Activated CD4-positive, alpha-beta T cell treated with anti-CD3 and anti-CD28 coated beads, Interleukin-2, amount 10 ng/mL, durations not matched to agents 24 days and 14 days (primary cell): ENCODE measurements at regions of chr6 and their contacts with region 1.

Region 1: DNA sequence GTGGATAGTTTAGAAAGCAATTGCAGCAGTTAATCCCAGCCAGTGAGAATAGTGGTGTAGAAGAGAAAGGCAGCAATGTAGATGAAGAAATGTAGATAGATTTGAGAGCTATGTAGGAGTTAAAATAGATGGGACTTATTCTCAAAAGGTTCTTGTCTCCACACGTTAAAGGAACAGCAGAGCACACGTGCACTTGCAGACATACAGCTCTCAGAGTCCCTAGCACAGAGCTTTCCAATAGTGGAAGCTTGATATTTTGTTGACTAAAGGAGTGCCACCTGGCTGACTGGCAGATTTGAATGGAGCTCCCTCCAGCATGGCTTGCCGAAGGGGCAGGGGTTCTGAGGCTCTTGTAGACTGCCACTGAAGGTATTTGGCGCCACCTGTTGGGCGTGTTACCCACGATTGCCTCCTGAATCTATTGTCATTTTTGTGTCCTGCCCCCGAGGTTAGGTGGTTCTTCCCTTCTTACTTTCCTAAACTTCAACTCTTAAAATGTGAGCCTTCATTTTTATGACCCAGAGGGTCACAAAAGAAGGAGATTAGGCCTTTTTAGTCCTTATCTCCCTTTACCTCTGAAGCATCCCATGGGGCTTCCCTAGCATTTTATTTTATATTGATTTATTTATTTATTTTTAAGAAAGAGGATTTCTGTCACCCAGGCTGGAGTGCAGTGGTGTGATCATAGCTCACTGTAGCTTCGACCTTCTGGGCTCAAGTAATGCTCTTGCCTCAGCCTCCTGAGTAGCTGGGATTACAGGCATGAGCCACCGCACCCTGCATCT is 16.4 kb downstream of the BRD2 start:
- DNase-seq: peak; percentile 96
- H3K4me3 Mint-ChIP-seq: no peak overlapping the region
- H3K27ac Mint-ChIP-seq: peak overlapping the region; percentile 22
- H3K4me1 Mint-ChIP-seq: peaks cover 16% of the 10 kb centered on the region
- H3K27me3 Mint-ChIP-seq: peaks cover 4% of the 10 kb centered on the region

Region 2: DNA sequence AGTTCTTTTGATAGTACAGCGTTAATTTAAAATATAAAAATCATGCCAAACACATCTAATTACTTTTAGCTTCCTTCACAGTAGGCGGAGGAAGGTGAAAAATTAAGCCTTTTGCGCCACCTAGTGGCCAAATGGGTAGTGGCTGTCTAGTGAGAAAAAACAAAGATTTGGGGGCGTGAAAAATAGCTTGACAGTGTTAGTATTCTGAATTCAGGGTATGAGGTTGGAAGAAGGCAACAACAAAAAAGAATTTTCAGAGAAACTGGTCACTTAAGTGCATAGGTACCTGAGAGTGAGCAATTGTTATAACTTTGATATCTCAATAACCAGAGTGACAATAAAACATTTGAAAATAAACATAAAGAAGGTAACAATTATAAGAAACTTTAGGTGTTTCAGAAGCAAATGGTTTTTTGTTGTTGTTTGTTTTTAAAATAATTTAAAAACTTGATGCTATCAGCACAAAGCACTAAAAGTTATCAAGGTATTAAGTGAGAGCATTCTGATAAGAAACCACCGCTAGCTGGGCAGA is 116.5 kb before region 1 on chr6:
- intact Hi-C with region 1: no loop called
- DNase-seq: peak; percentile 95
- H3K4me3 Mint-ChIP-seq: no peak overlapping the region
- H3K27ac Mint-ChIP-seq: no peak overlapping the region
- H3K4me1 Mint-ChIP-seq: peaks cover 31% of the 10 kb centered on the region
- H3K27me3 Mint-ChIP-seq: peaks cover 2% of the 10 kb centered on the region

Region 3: GRCh38 chr6:32933636-32934085 is 51.1 kb before region 1 on chr6:
- intact Hi-C with region 1: loop called (anchors 1 kb)
- DNase-seq: peak; percentile 93
- H3K4me3 Mint-ChIP-seq: no peak overlapping the region
- H3K27ac Mint-ChIP-seq: no peak overlapping the region
- H3K4me1 Mint-ChIP-seq: peaks cover 5% of the 10 kb centered on the region
- H3K27me3 Mint-ChIP-seq: peaks cover 26% of the 10 kb centered on the region